ENCODE measurements at regions of chrX and their contacts with region 1.

Region 1: GRCh38 chrX:15468036-15468435 is 25.1 kb downstream of the PIR start:
- DNase-seq: no peak
- ATAC-seq: peak; percentile 23; the same call in 1 of the 2 replicates
- H3K4me3 Mint-ChIP-seq: no peak overlapping the region
- H3K27ac Mint-ChIP-seq: no peak overlapping the region
- H3K4me1 Mint-ChIP-seq: peaks cover 24% of the 10 kb centered on the region
- H3K27me3 Mint-ChIP-seq: no peaks in the 10 kb centered on the region
- CTCF ChIP-seq: no peak

Region 2: DNA sequence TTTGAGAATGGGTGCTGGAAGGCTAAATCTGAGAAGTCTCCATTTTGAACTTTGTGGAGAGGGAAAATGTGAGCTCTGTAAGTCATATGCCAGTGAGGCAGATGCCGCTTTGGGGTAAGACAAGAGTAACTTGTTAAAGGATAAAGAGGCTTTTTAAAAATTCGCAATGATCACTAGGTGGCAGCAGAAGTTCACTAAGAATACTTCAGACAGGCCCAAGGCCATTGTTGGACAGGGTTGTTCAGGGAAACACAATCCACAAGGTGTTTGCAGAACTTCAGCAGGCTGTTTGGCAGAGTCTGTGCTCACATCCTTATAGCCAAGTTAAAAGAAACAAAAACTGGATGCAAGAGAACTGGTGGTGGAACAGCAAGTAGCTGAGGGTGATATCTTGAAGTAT is 119.0 kb before region 1 on chrX:
- CTCF ChIA-PET with region 1: interaction called, 48 read pairs
- POLR2A ChIA-PET with region 1: no interaction called
- DNase-seq: no peak
- ATAC-seq: peak; percentile 83
- H3K4me3 Mint-ChIP-seq: no peak overlapping the region
- H3K27ac Mint-ChIP-seq: no peak overlapping the region
- H3K4me1 Mint-ChIP-seq: peaks cover 9% of the 10 kb centered on the region
- H3K27me3 Mint-ChIP-seq: peaks cover 17% of the 10 kb centered on the region
- CTCF ChIP-seq: no peak

Region 3: GRCh38 chrX:15384304-15384703 is 83.7 kb before region 1 on chrX and contains the start of gene VEGFD:
- CTCF ChIA-PET with region 1: interaction called, 31 read pairs
- POLR2A ChIA-PET with region 1: no interaction called
- DNase-seq: no peak
- ATAC-seq: no peak; the same call in 1 of the 2 replicates
- H3K4me3 Mint-ChIP-seq: no peak within 1 kb of the TSS
- H3K27ac Mint-ChIP-seq: no peak within 1 kb of the TSS
- H3K4me1 Mint-ChIP-seq: peaks cover 24% of the 10 kb centered on the region
- H3K27me3 Mint-ChIP-seq: no peaks in the 10 kb centered on the region
- CTCF ChIP-seq: no peak
- total RNA-seq, gene VEGFD: 0.16 TPM in 1 of 3 replicates, not detected in the others

Region 4: GRCh38 chrX:15500497-15500966 is 32.5 kb after region 1 on chrX and contains the start of gene BMX:
- CTCF ChIA-PET with region 1: no interaction called
- POLR2A ChIA-PET with region 1: no interaction called
- DNase-seq: no peak
- ATAC-seq: no peak
- H3K4me3 Mint-ChIP-seq: no peak within 1 kb of the TSS
- H3K27ac Mint-ChIP-seq: no peak within 1 kb of the TSS
- H3K4me1 Mint-ChIP-seq: peaks cover 7% of the 10 kb centered on the region
- H3K27me3 Mint-ChIP-seq: no peaks in the 10 kb centered on the region
- CTCF ChIP-seq: no peak
- total RNA-seq, gene BMX: not detected in 3 replicates

Region 5: DNA sequence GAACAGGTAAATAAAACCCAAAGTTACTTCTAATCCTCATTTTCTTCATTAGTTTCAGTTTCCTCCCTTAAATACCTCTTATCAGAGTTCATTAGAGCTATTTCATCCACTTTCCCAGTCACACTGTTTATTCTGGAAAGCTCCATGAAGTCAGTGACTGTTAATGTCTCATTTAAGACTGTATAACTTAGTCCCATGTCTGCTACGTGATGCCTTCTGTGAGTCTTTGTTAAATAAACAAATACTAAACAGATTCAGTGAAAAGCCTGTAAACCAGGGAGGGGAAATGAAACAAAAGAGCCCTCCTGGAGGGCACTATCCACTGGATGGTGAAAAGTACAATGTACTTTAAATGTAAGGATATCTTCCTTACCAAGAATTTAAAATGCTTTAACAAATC is 108.0 kb after region 1 on chrX:
- CTCF ChIA-PET with region 1: no interaction called
- POLR2A ChIA-PET with region 1: no interaction called
- DNase-seq: no peak
- ATAC-seq: no peak
- H3K4me3 Mint-ChIP-seq: no peak overlapping the region
- H3K27ac Mint-ChIP-seq: no peak overlapping the region
- H3K4me1 Mint-ChIP-seq: peaks cover 21% of the 10 kb centered on the region
- H3K27me3 Mint-ChIP-seq: no peaks in the 10 kb centered on the region
- CTCF ChIP-seq: no peak